ENCODE measurements at regions of chr7 and their contacts with region 1.

Region 1: DNA sequence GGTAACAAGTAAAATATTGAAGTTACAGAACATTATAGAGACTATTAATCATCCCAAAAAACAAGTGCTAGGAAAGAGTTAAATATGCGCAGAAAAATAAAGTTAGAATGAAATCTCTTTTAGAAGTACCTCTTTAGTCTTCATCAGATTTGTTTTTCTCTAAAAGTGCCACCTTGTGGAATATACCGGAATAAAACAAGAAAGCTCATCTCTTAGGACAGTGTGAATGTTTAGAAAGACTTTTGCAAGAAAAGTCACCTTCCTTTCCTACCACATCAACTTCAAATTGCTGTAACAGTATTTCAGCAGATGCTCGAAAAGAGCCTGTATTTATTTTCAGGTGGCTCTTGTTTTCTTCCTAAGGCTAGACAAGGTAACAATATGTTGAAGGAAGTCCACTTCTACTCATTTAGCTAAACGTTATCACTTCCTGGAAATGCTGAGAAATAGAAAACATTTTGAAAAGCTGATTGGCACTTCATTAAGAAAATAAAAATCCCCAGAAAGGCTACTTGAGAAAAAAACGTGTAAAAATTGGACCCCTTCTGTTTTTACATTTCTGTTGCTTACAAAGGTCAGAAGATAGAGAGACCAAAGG is 19.8 kb upstream of the FAM133B start:
- DNase-seq: no peak
- CTCF ChIP-seq: peak; percentile 42

Region 2: DNA sequence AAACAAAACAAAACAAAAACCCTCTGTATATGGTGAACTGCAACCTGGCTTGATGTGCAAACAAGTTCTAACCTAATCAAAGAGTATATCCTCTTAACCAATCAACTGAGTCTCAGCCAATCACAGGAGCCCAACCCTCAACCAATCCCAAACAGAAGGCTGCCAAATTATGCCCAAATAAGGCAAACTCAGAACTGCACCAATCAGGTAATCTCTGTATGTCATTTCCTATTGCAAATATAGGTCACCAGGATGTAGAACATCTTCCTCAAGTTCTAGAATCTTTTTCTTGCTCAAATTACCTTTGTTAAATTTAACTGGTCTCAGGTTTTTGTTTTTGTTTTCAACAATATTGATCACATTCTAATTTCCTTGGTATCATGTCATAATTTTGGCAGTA is 25.0 kb before region 1 on chr7:
- CTCF ChIA-PET with region 1: interaction called, 19 read pairs
- POLR2A ChIA-PET with region 1: no interaction called
- DNase-seq: no peak
- CTCF ChIP-seq: no peak

Measured in GM10248 (cell line).